Naive thymus-derived CD8-positive, alpha-beta T cell (primary cell): ENCODE measurements at regions of chr5 and their contacts with region 1.

Region 1: DNA sequence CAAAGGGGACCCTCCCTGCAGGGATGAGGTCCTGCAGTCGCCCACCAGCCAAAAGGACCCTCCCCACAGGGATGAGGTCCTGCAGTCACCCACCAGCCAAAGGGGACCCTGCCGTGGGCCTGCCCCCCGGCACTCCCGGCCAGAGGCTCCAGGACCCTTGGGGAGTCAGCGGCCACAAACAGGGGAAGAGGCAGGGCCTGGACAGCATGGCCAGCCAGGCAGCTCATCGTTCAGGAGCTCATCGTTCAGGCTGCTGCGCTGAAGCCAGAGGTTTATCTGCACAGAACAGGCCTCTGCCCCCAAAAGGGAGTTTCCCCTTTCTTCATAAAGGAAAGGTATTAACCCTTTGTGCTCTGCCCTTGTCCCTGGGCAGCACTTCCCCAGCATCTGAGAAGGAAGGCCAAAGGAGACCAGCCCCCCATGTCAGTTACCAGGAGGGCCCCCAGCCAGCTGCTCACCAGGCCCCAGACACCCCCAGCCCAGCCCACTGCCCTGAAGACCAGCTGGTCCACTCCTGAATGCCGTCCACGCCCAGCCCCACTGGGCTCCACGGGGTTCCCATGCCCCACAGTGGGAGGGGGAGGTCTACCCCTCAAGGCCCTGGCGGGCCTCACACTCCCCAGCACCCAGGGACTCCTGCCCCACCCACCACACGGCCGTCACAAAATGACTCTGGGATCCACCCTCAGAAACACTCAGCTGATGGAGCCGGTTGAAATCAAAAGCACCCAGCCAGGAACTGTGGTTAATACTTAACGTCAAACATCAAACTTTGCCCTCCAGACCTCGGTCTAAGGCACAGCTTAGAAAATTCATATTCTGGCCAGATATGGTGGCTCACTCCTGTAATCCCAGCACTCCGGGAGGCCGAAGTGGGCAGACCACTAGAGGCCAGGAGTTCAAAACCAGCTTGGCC is 6.3 kb downstream of the SLC12A7 start:
- DNase-seq: peak in 9 of 10 donors; percentile 54 to 83 (median 81)
- ATAC-seq: peak; percentile 61 to 79
- H3K4me3 Mint-ChIP-seq: peak overlapping the region; percentile 69 to 93 (median 82)
- H3K27ac Mint-ChIP-seq: peak overlapping the region; percentile 66 to 99 (median 96)
- H3K4me1 Mint-ChIP-seq: peaks cover 41 to 95% (median 82%) of the 10 kb centered on the region in 4 donors
- H3K27me3 Mint-ChIP-seq: no peaks in the 10 kb centered on the region

Region 2: DNA sequence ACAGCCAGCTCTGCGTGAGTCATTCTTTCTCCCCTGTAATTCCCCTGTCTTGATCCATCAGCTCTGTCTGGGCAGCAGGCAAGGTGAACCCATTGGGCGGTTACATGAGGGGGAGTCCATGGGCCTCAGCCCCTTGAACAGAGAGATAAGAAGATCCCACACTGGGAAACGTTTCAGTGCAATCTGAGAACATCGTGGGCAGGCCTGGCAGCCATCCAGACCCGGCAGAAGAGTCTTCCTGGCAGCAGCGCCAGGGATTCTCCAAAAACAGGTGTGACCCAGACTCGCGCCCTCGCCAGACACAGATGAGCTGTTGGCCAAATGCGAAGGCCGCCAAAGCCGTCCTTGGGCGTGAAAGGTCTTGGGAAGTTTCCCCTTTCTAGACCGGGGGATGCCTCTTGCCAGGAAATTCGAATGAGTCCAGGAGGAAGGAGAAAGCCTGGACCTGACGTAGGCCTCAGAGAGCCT is 12.7 kb after region 1 on chr5:
- POLR2A ChIA-PET with region 1: interaction called, 16 read pairs
- DNase-seq: no peak
- ATAC-seq: no peak
- H3K4me3 Mint-ChIP-seq: peak overlapping the region in 1 of 10 donors; percentile 54
- H3K27ac Mint-ChIP-seq: peak overlapping the region in 2 of 10 donors; percentile 15 to 89
- H3K4me1 Mint-ChIP-seq: peaks cover 0 to 11% (median 8%) of the 10 kb centered on the region in 4 donors
- H3K27me3 Mint-ChIP-seq: no peaks in the 10 kb centered on the region